ENCODE measurements at regions of chr1 and their contacts with region 1.

Region 1: GRCh38 chr1:231421993-231422764 is at the start of gene EGLN1:
- DNase-seq: peak; percentile 79 to 85 (median 84)
- H3K4me3 ChIP-seq: peak within 1 kb of the TSS; percentile 70 to 80
- H3K4me3 Mint-ChIP-seq: peak within 1 kb of the TSS; percentile 90 to 97 (median 95)
- H3K27ac ChIP-seq: peak within 1 kb of the TSS; percentile 63
- H3K27ac Mint-ChIP-seq: peak within 1 kb of the TSS; percentile 83 to 98 (median 95)
- H3K4me1 ChIP-seq: peaks cover 43% of the 10 kb centered on the region
- H3K4me1 Mint-ChIP-seq: peaks cover 29 to 49% (median 38%) of the 10 kb centered on the region in 4 donors
- H3K27me3 ChIP-seq: no peaks in the 10 kb centered on the region
- H3K27me3 Mint-ChIP-seq: no peaks in the 10 kb centered on the region
- total RNA-seq, gene EGLN1: 23.5 to 29.3 TPM

Region 2: DNA sequence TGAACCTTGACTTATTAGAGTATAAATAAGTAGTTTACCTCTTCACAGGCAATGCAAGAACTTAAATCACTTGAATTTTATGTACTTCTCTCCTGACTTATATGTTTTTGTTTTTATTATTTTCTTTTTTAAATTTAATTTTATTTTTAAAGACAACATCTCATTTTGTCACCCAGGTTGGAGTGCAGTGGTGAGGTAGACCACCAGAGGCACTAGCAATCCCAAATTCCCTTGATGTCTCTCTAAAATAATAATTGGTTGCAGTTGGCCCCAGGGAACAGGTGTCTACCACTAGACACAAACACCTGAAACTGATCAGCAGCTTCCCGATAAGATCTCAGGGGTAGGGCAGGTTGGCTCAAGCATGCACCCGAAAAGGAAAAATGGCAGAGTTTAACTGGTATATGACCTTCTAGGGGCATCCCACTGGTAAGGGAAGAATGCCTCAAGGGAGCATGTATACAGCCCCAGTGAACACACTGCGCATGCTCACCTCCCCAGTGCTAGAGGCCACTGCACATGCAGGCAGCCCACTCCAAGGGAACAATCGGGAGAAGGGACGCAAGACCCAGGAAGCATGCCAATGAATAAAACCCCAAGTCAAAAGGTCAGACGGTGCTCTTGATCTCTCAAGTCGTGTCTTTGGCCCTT is 99.2 kb before region 1 on chr1:
- CTCF ChIA-PET with region 1: no interaction called
- POLR2A ChIA-PET with region 1: no interaction called
- intact Hi-C with region 1: no loop called
- DNase-seq: no peak
- H3K4me3 ChIP-seq: no peak overlapping the region
- H3K4me3 Mint-ChIP-seq: no peak overlapping the region
- H3K27ac ChIP-seq: no peak overlapping the region
- H3K27ac Mint-ChIP-seq: no peak overlapping the region
- H3K4me1 ChIP-seq: no peaks in the 10 kb centered on the region
- H3K4me1 Mint-ChIP-seq: no peaks in the 10 kb centered on the region
- H3K27me3 ChIP-seq: no peaks in the 10 kb centered on the region
- H3K27me3 Mint-ChIP-seq: no peaks in the 10 kb centered on the region

Region 3: DNA sequence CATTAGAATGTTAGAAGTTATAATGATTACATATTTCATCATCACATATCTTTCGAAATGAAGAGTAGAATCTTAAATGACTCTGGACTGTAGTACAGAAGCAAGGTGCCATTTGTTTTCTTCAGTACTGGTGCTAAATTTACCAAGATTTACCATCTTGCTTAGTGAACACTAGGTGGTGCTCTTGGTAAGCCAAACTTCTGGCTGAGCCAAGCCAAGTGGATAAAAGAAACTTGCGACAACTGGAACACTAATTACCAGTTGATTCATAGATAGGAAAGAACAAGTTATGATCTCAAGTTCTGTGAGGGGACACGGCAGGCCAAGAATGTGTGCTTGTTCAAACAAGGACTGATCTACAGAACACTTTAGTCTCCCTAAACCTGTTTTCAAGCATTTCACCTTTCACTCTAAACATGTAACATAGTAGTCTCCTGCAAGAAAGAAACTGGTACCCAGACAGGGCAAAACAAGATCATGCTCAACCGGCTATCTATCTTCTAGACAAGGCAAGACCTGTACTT is 64.3 kb before region 1 on chr1:
- CTCF ChIA-PET with region 1: interaction called, 5 read pairs
- POLR2A ChIA-PET with region 1: interaction called, 6 read pairs
- intact Hi-C with region 1: loop called (anchors 2 kb)
- DNase-seq: peak; percentile 53 to 62 (median 58)
- H3K4me3 ChIP-seq: no peak overlapping the region
- H3K4me3 Mint-ChIP-seq: no peak overlapping the region
- H3K27ac ChIP-seq: no peak overlapping the region
- H3K27ac Mint-ChIP-seq: peak overlapping the region in 5 of 7 donors; percentile 20 to 65 (median 29)
- H3K4me1 ChIP-seq: peaks cover 5% of the 10 kb centered on the region
- H3K4me1 Mint-ChIP-seq: peaks cover 5 to 9% (median 9%) of the 10 kb centered on the region in 4 donors
- H3K27me3 ChIP-seq: no peaks in the 10 kb centered on the region
- H3K27me3 Mint-ChIP-seq: no peaks in the 10 kb centered on the region

Region 4: DNA sequence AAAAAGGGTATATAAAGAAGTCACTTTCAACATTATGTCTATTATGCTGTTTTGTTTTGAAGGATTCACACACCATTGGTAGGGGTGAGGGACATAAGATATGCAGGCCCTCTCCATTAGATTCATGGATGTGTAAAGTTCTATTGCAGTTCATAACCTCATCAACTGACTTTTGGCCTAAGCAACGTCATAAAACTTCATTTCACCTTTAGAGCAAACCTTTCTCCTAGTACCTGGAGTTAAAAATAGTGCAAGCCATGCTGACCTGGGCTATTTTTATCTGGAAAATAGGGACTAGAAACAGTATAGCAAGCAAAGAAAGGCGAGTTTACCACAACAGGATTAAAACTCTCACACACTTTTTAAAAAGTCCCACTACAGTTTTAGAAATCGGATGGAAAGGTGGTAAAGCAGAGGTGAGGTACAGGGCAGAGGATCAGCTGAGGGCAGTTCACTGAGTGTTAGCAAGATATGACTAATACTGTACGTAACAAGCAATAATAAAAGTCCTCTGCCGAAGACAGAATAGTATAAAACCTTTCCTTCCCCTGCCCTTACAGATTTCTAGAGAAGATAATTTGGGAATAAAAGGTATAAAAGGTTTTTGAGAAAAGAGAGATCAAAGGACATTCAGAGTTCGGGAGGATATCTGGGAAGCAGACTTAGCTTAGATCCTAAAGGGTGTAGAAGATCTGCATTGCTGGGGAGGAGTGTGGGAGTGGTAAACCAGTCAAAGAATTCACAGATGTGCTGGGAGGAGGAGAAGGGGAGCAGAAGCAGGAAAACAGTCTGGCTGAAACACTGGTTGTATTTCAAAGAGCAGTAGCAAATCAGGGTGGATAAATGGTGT is 14.4 kb before region 1 on chr1:
- CTCF ChIA-PET with region 1: no interaction called
- POLR2A ChIA-PET with region 1: interaction called, 15 read pairs
- intact Hi-C with region 1: no loop called
- DNase-seq: no peak
- H3K4me3 ChIP-seq: no peak overlapping the region
- H3K4me3 Mint-ChIP-seq: no peak overlapping the region
- H3K27ac ChIP-seq: no peak overlapping the region
- H3K27ac Mint-ChIP-seq: no peak overlapping the region
- H3K4me1 ChIP-seq: peaks cover 56% of the 10 kb centered on the region
- H3K4me1 Mint-ChIP-seq: peaks cover 14 to 23% (median 20%) of the 10 kb centered on the region in 4 donors
- H3K27me3 ChIP-seq: no peaks in the 10 kb centered on the region
- H3K27me3 Mint-ChIP-seq: no peaks in the 10 kb centered on the region

Region 5: GRCh38 chr1:231528172-231529029 is 106.2 kb after region 1 on chr1 and contains the start of gene TSNAX:
- CTCF ChIA-PET with region 1: no interaction called
- POLR2A ChIA-PET with region 1: interaction called, 26 read pairs
- intact Hi-C with region 1: loop called (anchors 1 kb)
- DNase-seq: peak; percentile 87 to 94 (median 93)
- H3K4me3 ChIP-seq: peak within 1 kb of the TSS; percentile 59 to 86
- H3K4me3 Mint-ChIP-seq: peak within 1 kb of the TSS; percentile 96 to 98 (median 98)
- H3K27ac ChIP-seq: peak within 1 kb of the TSS; percentile 82
- H3K27ac Mint-ChIP-seq: peak within 1 kb of the TSS; percentile 99 to 100 (median 100)
- H3K4me1 ChIP-seq: peaks cover 52% of the 10 kb centered on the region
- H3K4me1 Mint-ChIP-seq: peaks cover 19 to 52% (median 36%) of the 10 kb centered on the region in 4 donors
- H3K27me3 ChIP-seq: no peaks in the 10 kb centered on the region
- H3K27me3 Mint-ChIP-seq: no peaks in the 10 kb centered on the region
- total RNA-seq, gene TSNAX: 43.5 to 50.7 TPM